ENCODE measurements at regions of chr12 and their contacts with region 1.

Region 1: GRCh38 chr12:111942557-111942956 is 70.4 kb downstream of the TMEM116 start:
- H3K4me3 Mint-ChIP-seq: no peak overlapping the region
- H3K27ac Mint-ChIP-seq: no peak overlapping the region
- H3K4me1 Mint-ChIP-seq: peaks cover 6% of the 10 kb centered on the region
- H3K27me3 Mint-ChIP-seq: no peaks in the 10 kb centered on the region

Region 2: DNA sequence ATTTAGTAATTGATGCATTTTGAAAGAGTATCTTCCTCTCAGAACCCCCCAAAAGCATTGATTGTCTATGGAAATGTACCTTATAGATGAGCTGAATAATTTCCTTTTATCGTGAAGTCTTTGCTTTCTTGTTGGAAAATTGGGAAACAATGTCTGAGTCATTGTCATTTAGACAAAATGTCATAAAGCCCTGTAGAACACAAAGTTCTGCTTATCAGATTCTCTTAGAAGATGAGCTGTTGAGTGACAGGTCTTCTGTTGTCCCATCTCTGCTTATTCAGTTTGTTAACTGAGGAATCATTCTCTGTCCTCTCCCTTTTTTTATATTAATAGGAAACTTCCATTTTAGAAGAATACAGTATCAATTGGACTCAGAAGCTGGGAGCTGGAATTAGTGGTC is 77.6 kb before region 1 on chr12:
- intact Hi-C with region 1: no loop called
- H3K4me3 Mint-ChIP-seq: no peak overlapping the region
- H3K27ac Mint-ChIP-seq: no peak overlapping the region
- H3K4me1 Mint-ChIP-seq: peaks cover 5% of the 10 kb centered on the region
- H3K27me3 Mint-ChIP-seq: no peaks in the 10 kb centered on the region

Region 3: GRCh38 chr12:111975161-111975931 is 32.8 kb after region 1 on chr12:
- intact Hi-C with region 1: no loop called
- H3K4me3 Mint-ChIP-seq: no peak overlapping the region
- H3K27ac Mint-ChIP-seq: no peak overlapping the region
- H3K4me1 Mint-ChIP-seq: peaks cover 13% of the 10 kb centered on the region
- H3K27me3 Mint-ChIP-seq: no peaks in the 10 kb centered on the region

Region 4: GRCh38 chr12:112012775-112013600 is 70.4 kb after region 1 on chr12 and contains the starts of genes ERP29 and TMEM116:
- intact Hi-C with region 1: loop called (anchors 5 kb)
- H3K4me3 Mint-ChIP-seq: peak within 1 kb of the TSS; percentile 95
- H3K27ac Mint-ChIP-seq: peak within 1 kb of the TSS; percentile 98
- H3K4me1 Mint-ChIP-seq: peaks cover 56% of the 10 kb centered on the region
- H3K27me3 Mint-ChIP-seq: no peaks in the 10 kb centered on the region

Region 5: GRCh38 chr12:112025808-112026375 is 83.3 kb after region 1 on chr12:
- intact Hi-C with region 1: loop called (anchors 5 kb)
- H3K4me3 Mint-ChIP-seq: no peak overlapping the region
- H3K27ac Mint-ChIP-seq: peak overlapping the region; percentile 81
- H3K4me1 Mint-ChIP-seq: peaks cover 25% of the 10 kb centered on the region
- H3K27me3 Mint-ChIP-seq: no peaks in the 10 kb centered on the region

Region 6: DNA sequence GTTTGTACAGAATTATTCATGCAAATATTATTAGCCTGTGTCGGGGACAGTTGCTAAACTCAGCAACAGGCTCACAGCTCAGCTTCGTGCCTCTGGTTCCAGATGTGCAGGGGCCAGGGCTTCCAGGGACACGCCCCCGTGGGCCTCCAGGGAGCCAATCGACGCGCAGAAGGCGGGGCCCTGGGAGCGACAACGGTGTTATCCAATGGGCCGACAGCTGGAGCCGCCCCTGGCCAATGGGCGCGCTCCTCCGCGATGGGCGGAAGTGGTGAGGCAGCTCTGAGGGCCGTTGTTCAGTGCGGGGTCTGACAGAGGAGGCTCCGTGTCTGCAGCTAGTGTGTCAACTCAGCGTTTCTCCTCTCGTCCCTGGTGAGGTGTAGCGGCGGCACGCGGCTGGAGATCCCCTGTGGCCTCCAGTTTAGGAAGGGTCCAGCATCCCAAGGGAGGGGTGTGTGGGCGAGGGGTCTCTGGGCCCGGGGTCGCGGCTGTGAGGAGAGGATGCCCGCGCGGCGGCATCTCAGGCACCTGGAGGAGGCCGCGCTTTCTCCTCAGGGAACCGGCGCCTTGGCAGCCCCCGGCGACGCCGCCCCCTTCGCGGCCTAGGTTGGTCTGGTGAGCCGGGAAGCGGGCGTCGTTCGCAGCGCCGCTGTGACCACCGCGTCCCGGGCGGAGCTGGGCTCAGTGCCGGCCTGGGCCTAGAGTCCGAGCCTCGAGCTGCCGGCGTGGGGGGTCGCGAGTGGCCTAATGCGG is 182.9 kb after region 1 on chr12 and contains the start of gene TRAFD1:
- intact Hi-C with region 1: loop called (anchors 10 kb)
- H3K4me3 Mint-ChIP-seq: peak within 1 kb of the TSS; percentile 84
- H3K27ac Mint-ChIP-seq: peak within 1 kb of the TSS; percentile 87
- H3K4me1 Mint-ChIP-seq: peaks cover 30% of the 10 kb centered on the region
- H3K27me3 Mint-ChIP-seq: no peaks in the 10 kb centered on the region